ENCODE measurements at regions of chr6 and their contacts with region 1.

Region 1: GRCh38 chr6:136226027-136226673 is 24.0 kb downstream of the MTFR2 start:
- DNase-seq: no peak

Region 2: GRCh38 chr6:135451693-135452092 is 774.5 kb before region 1 on chr6:
- intact Hi-C with region 1: loop called (anchors 5 kb)
- DNase-seq: no peak

Region 3: DNA sequence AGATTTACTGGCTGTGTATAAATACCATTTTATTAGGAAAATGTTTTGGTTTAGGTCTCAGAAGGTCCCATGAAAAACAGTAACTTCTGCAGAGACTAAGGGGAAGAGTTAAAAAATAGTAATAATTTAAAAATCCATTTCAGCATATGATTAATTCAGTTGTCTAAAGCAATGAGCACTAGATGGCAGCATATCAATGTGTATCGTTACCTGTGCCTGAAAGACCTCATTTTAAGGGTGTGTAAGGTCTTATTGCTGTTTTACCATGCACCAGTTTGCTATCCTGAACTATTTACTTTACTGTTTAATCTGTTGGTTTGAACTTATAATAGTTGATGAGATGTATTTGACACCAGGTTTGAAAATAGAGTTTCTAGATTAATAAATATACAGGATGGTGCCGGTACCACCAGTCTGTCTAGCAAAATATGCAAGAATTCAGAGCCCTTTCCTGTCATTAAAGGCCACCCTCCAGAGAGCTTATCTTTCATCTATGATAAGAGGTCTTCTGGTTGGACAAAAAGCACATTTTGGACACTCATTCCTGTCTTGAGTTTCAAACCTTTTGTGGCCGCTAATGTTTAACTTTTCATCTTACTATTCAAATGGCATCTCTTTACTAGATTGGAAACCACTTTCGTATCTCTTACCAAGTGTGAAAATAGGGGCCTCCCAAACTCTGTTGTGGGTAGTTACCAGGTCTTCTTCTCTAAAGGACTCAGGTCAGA is 719.7 kb before region 1 on chr6:
- intact Hi-C with region 1: loop called (anchors 10 kb)
- DNase-seq: no peak

Region 4: DNA sequence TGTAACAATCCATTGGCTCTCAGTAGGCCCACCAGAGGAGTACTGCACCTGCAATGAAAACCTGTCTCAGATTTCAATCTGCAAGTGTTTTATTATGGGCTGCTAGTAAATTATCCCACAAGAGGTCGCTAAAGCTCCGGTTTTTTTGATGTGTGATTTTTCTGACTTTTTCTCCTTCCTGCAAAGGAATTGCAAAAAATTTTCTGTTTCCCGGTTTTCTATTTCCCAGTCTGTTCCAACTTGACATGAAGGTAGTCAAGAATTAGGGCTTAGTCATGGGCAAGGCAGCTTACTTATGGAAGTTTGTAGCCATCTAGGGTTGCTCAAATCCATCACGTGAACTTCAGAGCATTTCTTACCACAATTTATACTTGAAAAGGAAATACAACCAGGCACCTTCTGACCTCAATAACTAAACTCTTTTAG is 690.1 kb before region 1 on chr6:
- intact Hi-C with region 1: loop called (anchors 2 kb)
- DNase-seq: no peak

Region 5: GRCh38 chr6:136031982-136032381 is 194.2 kb before region 1 on chr6:
- intact Hi-C with region 1: loop called (anchors 2 kb)
- DNase-seq: no peak

Region 6: DNA sequence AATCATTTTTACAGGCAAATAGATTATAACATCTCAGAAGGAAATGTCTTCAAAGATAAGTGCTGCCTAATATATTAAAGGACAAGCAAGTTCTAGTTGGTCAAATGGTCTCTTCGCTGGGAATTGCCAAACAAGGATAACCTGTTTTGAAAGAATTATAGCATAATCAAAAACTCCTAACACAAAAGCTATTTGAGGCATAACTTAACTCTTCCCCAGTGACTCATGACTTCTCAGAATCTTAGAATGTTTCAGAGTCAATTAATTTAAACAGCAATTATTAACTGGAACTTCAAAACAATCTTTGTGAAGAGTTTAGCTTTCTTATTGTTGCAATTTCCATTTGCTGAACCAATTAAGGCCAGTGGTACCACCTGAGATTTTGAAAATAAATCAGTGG is 102.7 kb before region 1 on chr6:
- intact Hi-C with region 1: loop called (anchors 10 kb)
- DNase-seq: no peak

Measured in cardiac septum (tissue), 1 donor.